Naive thymus-derived CD4-positive, alpha-beta T cell (primary cell): ENCODE measurements at regions of chr3 and their contacts with region 1.

Region 1: GRCh38 chr3:128725932-128726690 is at the start of gene RAB7A:
- DNase-seq: peak; percentile 92 to 97 (median 97)
- ATAC-seq: peak; percentile 98
- H3K4me3 ChIP-seq: peak within 1 kb of the TSS; percentile 57
- H3K4me3 Mint-ChIP-seq: peak within 1 kb of the TSS; percentile 89 to 98 (median 96)
- H3K27ac ChIP-seq: peak within 1 kb of the TSS; percentile 100
- H3K27ac Mint-ChIP-seq: peak within 1 kb of the TSS; percentile 92 to 98 (median 95)
- H3K4me1 ChIP-seq: peaks cover 32 to 38% of the 10 kb centered on the region in 2 donors
- H3K4me1 Mint-ChIP-seq: peaks cover 49 to 64% (median 60%) of the 10 kb centered on the region in 7 donors
- H3K27me3 ChIP-seq: no peaks in the 10 kb centered on the region
- H3K27me3 Mint-ChIP-seq: peaks cover 0 to 3% (median 0%) of the 10 kb centered on the region in 5 donors
- total RNA-seq, gene RAB7A: 124 to 249 (median 172) TPM

Region 2: DNA sequence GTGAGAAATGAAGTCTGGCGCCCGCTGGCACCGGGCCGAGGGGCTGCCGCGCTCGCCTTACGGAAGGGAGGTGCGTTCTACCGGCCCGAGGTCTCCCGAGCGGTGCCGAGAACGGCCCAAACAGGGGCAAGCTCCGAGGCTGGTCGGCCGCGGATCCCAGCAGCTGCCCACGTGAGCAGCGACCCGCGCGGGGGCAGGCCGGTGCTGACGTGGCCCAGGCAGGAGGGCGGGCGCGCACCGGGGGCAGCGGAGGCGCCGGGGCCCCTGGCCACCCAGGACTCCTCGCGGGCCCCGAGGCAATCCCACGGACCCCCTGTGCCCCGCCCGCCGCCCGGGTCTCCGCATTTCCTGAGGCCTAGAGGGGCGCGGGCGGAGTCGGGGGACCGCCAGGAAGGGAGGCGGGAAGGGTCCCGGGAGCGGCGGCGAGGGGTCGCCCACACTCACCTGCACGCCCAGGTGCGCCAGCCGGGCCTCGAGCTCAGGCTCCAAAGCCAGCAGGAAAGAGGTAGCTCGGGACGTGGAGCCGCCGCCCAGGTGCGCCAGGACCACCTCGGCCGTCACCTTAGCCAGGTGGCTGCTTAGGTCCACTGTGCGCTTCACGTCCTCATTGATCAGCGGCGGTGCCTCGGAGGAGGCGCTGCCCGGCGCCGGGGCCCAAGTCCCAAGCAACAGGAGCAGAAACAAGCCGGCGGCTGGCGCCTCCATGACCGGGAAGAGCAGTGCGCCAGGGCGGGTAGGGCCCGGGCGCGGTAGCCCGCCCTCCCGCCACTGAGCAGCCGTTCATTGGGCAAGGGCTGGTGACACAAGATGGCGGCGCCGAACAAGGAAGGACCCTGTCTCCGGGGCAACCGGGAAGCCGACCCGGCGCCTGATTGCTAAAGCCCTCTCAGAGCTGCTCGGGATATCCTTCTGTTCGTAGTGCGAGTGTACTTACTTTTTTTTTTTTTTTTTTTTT is 75.7 kb before region 1 on chr3 and contains the start of gene RPN1:
- CTCF ChIA-PET with region 1: no interaction called
- POLR2A ChIA-PET with region 1: interaction called, 4 read pairs
- intact Hi-C with region 1: loop called (anchors 1 kb)
- DNase-seq: peak; percentile 81 to 98 (median 97)
- ATAC-seq: peak; percentile 98
- H3K4me3 ChIP-seq: peak within 1 kb of the TSS; percentile 94
- H3K4me3 Mint-ChIP-seq: peak within 1 kb of the TSS; percentile 83 to 92 (median 90)
- H3K27ac ChIP-seq: peak within 1 kb of the TSS; percentile 99
- H3K27ac Mint-ChIP-seq: peak within 1 kb of the TSS; percentile 73 to 94 (median 92)
- H3K4me1 ChIP-seq: peaks cover 12 to 17% of the 10 kb centered on the region in 2 donors
- H3K4me1 Mint-ChIP-seq: peaks cover 25 to 43% (median 37%) of the 10 kb centered on the region in 7 donors
- H3K27me3 ChIP-seq: no peaks in the 10 kb centered on the region
- H3K27me3 Mint-ChIP-seq: no peaks in the 10 kb centered on the region
- total RNA-seq, gene RPN1: 76.7 to 203 (median 88.5) TPM

Region 3: GRCh38 chr3:128714887-128715491 is 11.1 kb before region 1 on chr3:
- CTCF ChIA-PET with region 1: no interaction called
- POLR2A ChIA-PET with region 1: interaction called, 11 read pairs
- intact Hi-C with region 1: loop called in 1 of 2 experiments (anchors 1 kb)
- DNase-seq: peak in 8 of 9 donors; percentile 30 to 53 (median 44)
- ATAC-seq: peak; percentile 94
- H3K4me3 ChIP-seq: no peak overlapping the region
- H3K4me3 Mint-ChIP-seq: peak overlapping the region; percentile 9 to 77 (median 68)
- H3K27ac ChIP-seq: peak overlapping the region; percentile 48
- H3K27ac Mint-ChIP-seq: peak overlapping the region; percentile 65 to 96 (median 90)
- H3K4me1 ChIP-seq: peaks cover 0 to 21% of the 10 kb centered on the region in 2 donors
- H3K4me1 Mint-ChIP-seq: peaks cover 8 to 40% (median 27%) of the 10 kb centered on the region in 7 donors
- H3K27me3 ChIP-seq: no peaks in the 10 kb centered on the region
- H3K27me3 Mint-ChIP-seq: peaks cover 0 to under 1% (median 0%) of the 10 kb centered on the region in 5 donors

Region 4: GRCh38 chr3:128775912-128776542 is 49.9 kb after region 1 on chr3:
- CTCF ChIA-PET with region 1: no interaction called
- POLR2A ChIA-PET with region 1: no interaction called
- intact Hi-C with region 1: no loop called
- DNase-seq: no peak
- ATAC-seq: no peak
- H3K4me3 ChIP-seq: no peak overlapping the region
- H3K4me3 Mint-ChIP-seq: peak overlapping the region in 4 of 10 donors; percentile 2 to 61 (median 10)
- H3K27ac ChIP-seq: no peak overlapping the region
- H3K27ac Mint-ChIP-seq: peak overlapping the region in 7 of 9 donors; percentile 3 to 84 (median 37)
- H3K4me1 ChIP-seq: peaks cover 5 to 24% of the 10 kb centered on the region in 2 donors
- H3K4me1 Mint-ChIP-seq: peaks cover 35 to 86% (median 84%) of the 10 kb centered on the region in 7 donors
- H3K27me3 ChIP-seq: no peaks in the 10 kb centered on the region
- H3K27me3 Mint-ChIP-seq: no peaks in the 10 kb centered on the region

Region 5: GRCh38 chr3:128794770-128795649 is 68.9 kb after region 1 on chr3:
- CTCF ChIA-PET with region 1: interaction called, 8 read pairs
- POLR2A ChIA-PET with region 1: interaction called, 16 read pairs
- intact Hi-C with region 1: loop called (anchors 2 kb)
- DNase-seq: peak; percentile 26 to 81 (median 76)
- ATAC-seq: peak; percentile 98
- H3K4me3 ChIP-seq: no peak overlapping the region
- H3K4me3 Mint-ChIP-seq: peak overlapping the region; percentile 26 to 78 (median 51)
- H3K27ac ChIP-seq: peak overlapping the region; percentile 54
- H3K27ac Mint-ChIP-seq: peak overlapping the region; percentile 71 to 96 (median 85)
- H3K4me1 ChIP-seq: peaks cover 11 to 54% of the 10 kb centered on the region in 2 donors
- H3K4me1 Mint-ChIP-seq: peaks cover 32 to 74% (median 66%) of the 10 kb centered on the region in 7 donors
- H3K27me3 ChIP-seq: no peaks in the 10 kb centered on the region
- H3K27me3 Mint-ChIP-seq: no peaks in the 10 kb centered on the region

Region 6: DNA sequence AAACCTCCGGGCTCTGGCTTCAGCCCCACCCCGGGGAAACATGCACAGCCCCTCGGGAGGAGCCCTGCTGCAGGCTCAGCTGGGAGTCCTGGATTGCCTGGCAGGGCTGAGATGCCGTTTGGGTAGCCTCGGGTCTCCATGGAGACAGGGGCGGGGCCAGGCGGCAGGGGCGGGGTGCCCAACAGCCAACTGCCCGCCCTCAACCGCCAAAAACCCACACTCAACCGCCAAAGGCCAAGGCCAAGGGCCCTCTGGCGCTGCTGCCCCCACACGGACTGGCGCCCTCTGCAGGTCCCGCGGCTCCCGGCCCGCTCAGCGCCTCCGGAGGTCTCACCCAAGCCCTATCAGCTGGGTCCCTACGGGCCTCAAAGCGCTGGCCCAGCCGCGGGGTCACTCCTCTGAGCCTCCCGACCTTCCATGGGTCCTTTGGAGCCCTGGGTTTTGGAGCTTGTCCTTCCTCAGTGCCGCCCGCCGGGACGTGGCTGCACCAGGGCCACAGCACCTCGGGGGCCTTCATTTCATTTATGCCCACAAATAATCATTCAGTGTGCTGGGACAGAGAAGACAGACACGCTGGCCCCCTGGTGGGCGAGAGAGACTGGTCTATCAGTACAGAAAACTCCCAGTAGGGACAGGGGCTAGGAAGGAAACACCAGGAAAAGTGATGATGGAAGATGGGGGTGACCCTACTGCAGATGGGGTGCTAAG is 119.8 kb after region 1 on chr3:
- CTCF ChIA-PET with region 1: interaction called, 5 read pairs
- POLR2A ChIA-PET with region 1: interaction called, 3 read pairs
- intact Hi-C with region 1: loop called (anchors 1 kb)
- DNase-seq: peak; percentile 61 to 87 (median 74)
- ATAC-seq: peak; percentile 85
- H3K4me3 ChIP-seq: peak overlapping the region; percentile 65
- H3K4me3 Mint-ChIP-seq: peak overlapping the region; percentile 65 to 88 (median 82)
- H3K27ac ChIP-seq: peak overlapping the region; percentile 64
- H3K27ac Mint-ChIP-seq: peak overlapping the region; percentile 64 to 93 (median 81)
- H3K4me1 ChIP-seq: peaks cover 0 to 14% of the 10 kb centered on the region in 2 donors
- H3K4me1 Mint-ChIP-seq: peaks cover 11 to 22% (median 17%) of the 10 kb centered on the region in 7 donors
- H3K27me3 ChIP-seq: no peaks in the 10 kb centered on the region
- H3K27me3 Mint-ChIP-seq: peaks cover 0 to 2% (median 0%) of the 10 kb centered on the region in 5 donors

Region 7: GRCh38 chr3:129278439-129278970 is 552.4 kb after region 1 on chr3 and contains the start of gene HMCES:
- CTCF ChIA-PET with region 1: no interaction called
- POLR2A ChIA-PET with region 1: interaction called, 3 read pairs
- intact Hi-C with region 1: loop called in 1 of 2 experiments (anchors 10 kb)
- DNase-seq: peak; percentile 92 to 98 (median 95)
- ATAC-seq: peak; percentile 98
- H3K4me3 ChIP-seq: peak within 1 kb of the TSS; percentile 99
- H3K4me3 Mint-ChIP-seq: peak within 1 kb of the TSS; percentile 95 to 99 (median 98)
- H3K27ac ChIP-seq: peak within 1 kb of the TSS; percentile 99
- H3K27ac Mint-ChIP-seq: peak within 1 kb of the TSS; percentile 89 to 100 (median 98)
- H3K4me1 ChIP-seq: peaks cover 14 to 29% of the 10 kb centered on the region in 2 donors
- H3K4me1 Mint-ChIP-seq: peaks cover 21 to 50% (median 37%) of the 10 kb centered on the region in 7 donors
- H3K27me3 ChIP-seq: no peaks in the 10 kb centered on the region
- H3K27me3 Mint-ChIP-seq: no peaks in the 10 kb centered on the region
- total RNA-seq, gene HMCES: 45.7 to 56.4 (median 52.5) TPM

Region 8: DNA sequence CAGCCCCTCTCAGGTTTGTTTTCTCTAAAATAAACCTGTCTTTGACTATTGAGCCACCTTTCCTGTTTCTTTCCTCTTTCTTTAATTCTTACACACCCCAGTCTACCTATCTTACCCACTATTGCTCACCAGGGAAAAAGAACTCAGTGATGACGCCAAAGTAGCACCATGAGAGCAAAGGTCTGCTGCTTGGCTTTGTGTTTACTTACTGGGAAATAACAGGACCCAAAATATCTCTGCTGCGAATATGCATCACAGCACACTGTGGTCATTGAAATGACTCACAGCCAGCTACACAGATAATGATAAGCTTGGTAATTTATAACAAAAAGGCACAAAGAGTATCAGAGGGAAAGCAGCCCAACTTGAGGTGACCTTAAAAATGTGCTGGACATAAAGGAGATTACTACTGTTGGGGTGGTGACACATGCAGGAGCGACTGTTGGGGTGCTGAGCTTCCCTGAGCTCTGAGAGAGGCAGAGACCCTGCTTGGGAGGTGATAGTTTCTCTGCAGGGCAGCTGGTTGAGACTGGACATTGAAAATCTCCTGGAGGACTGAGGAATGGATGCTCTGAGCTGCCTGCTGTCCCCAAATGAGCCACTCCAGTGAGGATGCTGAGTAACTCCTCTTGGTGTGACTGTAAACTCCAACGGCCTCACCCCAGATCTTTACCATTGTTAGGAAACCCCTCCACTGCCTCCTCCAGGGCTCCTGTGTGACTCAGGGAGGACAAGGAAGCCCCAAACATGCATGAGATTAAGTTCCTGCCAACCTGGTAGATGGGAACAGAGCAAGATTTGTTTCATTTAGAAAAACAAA is 687.8 kb after region 1 on chr3:
- CTCF ChIA-PET with region 1: no interaction called
- POLR2A ChIA-PET with region 1: no interaction called
- intact Hi-C with region 1: no loop called
- DNase-seq: no peak
- ATAC-seq: no peak
- H3K4me3 ChIP-seq: no peak overlapping the region
- H3K4me3 Mint-ChIP-seq: no peak overlapping the region
- H3K27ac ChIP-seq: no peak overlapping the region
- H3K27ac Mint-ChIP-seq: no peak overlapping the region
- H3K4me1 ChIP-seq: no peaks in the 10 kb centered on the region
- H3K4me1 Mint-ChIP-seq: no peaks in the 10 kb centered on the region
- H3K27me3 ChIP-seq: no peaks in the 10 kb centered on the region
- H3K27me3 Mint-ChIP-seq: peaks cover 0 to 14% (median 0%) of the 10 kb centered on the region in 5 donors